ENCODE measurements at regions of chr20 and their contacts with region 1.

Region 1: GRCh38 chr20:47272893-47273590 is 83.5 kb downstream of the ZMYND8 start:
- DNase-seq: peak; percentile 92
- ATAC-seq: peak; percentile 12
- H3K4me3 ChIP-seq: no peak overlapping the region
- H3K27ac ChIP-seq: no peak overlapping the region
- H3K4me1 ChIP-seq: peaks cover 30% of the 10 kb centered on the region
- H3K27me3 ChIP-seq: no peaks in the 10 kb centered on the region
- CTCF ChIP-seq: peak; percentile 97

Region 2: DNA sequence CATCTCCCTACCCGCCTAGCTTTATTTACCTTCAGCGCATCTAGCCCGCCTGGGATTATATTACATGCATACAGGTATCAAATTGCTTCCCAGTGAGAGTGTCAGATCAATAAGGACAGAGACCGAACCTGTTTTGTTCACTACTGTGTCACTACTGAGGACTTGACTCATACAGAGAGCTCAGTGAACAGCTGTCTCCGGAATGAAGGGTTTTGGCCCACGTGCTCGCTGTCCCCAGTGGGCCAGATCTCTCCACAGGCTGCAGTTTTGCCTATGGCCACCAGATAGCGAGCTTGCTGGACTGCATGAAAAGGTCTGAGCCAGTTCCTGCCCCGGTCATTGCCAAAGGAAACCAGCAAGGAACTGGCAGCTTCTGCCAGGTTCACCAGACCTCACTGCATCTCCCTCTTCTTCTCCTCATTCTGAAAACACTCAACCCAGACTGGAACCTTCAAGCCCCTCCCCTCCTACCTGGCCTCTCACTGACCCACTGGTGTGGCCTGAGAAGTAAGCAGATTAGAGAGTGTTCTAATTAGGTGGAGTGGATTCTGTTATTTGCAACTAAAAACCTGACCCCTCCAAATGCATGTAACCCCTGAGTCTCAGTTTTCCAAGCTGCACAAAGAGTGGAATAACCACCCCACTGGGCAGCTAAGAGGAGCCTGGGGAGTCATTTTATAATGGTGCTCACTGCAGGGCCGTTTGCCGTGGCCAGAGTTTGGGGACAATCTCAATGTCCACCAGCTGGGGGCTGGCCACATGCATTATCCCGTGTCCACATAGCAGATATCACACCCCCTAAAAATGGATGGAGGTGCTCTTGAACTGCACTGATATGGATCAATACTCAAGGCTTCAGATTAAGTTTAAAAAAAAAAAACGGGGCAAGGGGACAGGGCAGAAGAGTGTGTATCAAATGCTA is 67.2 kb before region 1 on chr20:
- CTCF ChIA-PET with region 1: interaction called, 4 read pairs
- POLR2A ChIA-PET with region 1: no interaction called
- intact Hi-C with region 1: loop called (anchors 2 kb)
- DNase-seq: peak; percentile 97
- ATAC-seq: peak; percentile 82
- H3K4me3 ChIP-seq: no peak overlapping the region; the same call in 1 of the 2 replicates
- H3K27ac ChIP-seq: peak overlapping the region; percentile 96
- H3K4me1 ChIP-seq: peaks cover 46% of the 10 kb centered on the region
- H3K27me3 ChIP-seq: no peaks in the 10 kb centered on the region
- CTCF ChIP-seq: peak; percentile 92

Region 3: GRCh38 chr20:47317127-47317895 is 44.3 kb after region 1 on chr20:
- CTCF ChIA-PET with region 1: interaction called, 4 read pairs
- POLR2A ChIA-PET with region 1: no interaction called
- intact Hi-C with region 1: loop called (anchors 1 kb)
- DNase-seq: peak; percentile 96
- ATAC-seq: peak; percentile 60
- H3K4me3 ChIP-seq: 0 out of 2 replicates have a peak overlapping the region, but pooled peaks have one; percentile 19
- H3K27ac ChIP-seq: peak overlapping the region; percentile 95
- H3K4me1 ChIP-seq: peaks cover 70% of the 10 kb centered on the region
- H3K27me3 ChIP-seq: no peaks in the 10 kb centered on the region
- CTCF ChIP-seq: no peak

Region 4: DNA sequence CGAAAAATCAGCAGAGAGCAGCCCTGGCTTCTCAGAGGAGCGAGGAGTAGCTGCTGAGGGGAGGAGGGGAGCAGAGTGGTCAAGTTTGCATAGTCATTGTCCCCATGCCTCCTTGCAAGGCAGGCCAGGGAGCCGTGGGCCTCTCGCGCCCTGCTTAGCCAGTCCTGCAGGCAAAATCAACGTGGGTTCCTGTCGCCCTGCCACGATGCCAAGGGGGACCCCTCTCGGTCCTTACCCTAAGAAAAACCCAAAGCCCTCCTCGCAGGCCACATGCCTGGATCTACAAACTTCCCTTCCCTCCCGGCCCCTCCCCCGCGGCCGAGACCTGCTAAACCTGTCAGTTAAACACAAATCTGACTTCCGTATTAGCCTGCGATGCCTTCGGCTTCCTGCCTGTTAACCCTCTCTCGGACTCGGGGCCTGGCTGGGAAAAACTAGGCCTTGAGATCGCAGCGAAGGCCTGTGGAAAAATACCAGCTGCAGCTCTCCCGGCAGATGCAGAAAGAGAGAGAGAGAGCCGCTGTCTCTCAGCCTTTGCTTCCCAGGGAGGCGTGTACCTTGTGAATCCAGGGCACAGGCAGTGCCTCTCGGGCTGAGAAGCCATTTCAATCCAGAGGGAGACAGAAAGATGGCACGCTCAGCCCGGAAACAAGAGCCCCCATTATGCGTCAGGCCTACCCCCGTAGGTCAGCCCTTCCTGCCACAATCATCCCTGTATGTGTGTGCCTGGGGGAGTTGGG is 84.4 kb after region 1 on chr20:
- CTCF ChIA-PET with region 1: interaction called, 8 read pairs
- POLR2A ChIA-PET with region 1: interaction called, 12 read pairs
- intact Hi-C with region 1: loop called (anchors 1 kb)
- DNase-seq: peak; percentile 96
- ATAC-seq: peak; percentile 32
- H3K4me3 ChIP-seq: no peak overlapping the region
- H3K27ac ChIP-seq: peak overlapping the region; percentile 96
- H3K4me1 ChIP-seq: peaks cover 91% of the 10 kb centered on the region
- H3K27me3 ChIP-seq: no peaks in the 10 kb centered on the region
- CTCF ChIP-seq: no peak

Region 5: DNA sequence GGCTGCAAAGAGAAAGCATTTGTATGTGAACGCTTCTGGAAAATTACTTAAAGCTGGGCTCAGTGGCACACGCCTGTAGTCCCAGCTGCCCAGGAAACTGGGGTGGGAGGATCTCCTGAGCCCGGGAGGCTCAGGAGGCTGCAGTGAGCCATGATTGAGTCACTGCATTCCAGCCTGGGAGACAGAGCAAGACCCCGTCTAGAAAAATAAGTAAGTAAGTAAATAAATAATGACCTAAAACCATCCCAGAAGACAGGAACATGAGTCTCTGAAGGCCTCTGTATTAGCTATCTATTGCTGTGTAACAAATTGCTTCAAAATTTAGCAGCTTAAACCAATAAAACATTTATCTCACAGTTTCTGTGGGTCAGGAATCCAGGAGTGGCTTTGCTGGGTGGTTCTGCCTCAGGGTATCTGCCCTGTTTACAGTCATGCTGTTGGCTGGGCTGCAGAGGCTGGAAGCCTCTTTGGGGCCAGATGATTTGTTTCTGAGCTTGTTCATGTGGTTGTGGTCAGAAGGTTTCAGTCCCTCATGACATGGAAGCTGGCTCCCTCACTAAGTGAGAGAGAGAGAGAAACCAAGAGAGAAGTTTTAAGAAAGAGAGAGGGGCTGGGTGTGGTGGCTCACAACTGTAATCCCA is 180.2 kb after region 1 on chr20:
- CTCF ChIA-PET with region 1: no interaction called
- POLR2A ChIA-PET with region 1: no interaction called
- intact Hi-C with region 1: no loop called
- DNase-seq: peak; percentile 96
- ATAC-seq: peak; percentile 99
- H3K4me3 ChIP-seq: peak overlapping the region; percentile 45
- H3K27ac ChIP-seq: peak overlapping the region; percentile 90
- H3K4me1 ChIP-seq: peaks cover 43% of the 10 kb centered on the region
- H3K27me3 ChIP-seq: no peaks in the 10 kb centered on the region
- CTCF ChIP-seq: no peak

Region 6: DNA sequence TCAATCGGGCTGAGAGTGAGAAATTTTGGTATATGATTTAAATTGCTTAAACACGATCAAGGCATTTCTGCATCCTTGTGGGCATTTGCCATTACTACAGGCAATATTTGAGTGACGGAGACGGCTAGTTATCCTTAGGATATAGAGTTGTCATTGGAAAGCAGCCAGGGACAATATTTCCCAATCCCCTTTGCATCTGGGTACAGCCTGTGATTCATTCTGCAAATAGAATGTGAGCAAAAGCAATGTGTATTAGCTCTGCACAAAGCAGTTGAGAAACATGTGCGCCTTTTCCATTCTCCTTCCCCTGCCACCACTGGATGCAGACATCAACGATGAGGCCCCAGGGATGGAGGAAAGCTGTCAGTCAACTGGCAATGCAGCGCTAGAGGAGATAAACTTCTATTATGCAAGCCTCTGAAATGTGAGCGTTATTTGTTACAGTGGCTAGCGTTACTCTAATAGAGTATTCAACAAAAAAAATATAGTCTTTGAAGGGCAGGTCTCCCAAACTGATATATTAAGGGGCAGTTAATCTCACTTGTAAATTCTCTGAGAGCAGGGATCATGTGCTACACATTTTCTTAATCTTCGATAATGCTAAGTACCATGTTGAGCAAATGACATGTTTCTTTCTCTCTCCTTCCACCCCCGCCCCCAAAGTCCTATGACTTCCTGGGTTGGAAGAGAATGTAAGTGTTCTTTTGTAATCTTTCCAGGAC is 191.5 kb after region 1 on chr20:
- CTCF ChIA-PET with region 1: interaction called, 8 read pairs
- POLR2A ChIA-PET with region 1: no interaction called
- intact Hi-C with region 1: loop called (anchors 1 kb)
- DNase-seq: peak; percentile 100
- ATAC-seq: peak; percentile 98
- H3K4me3 ChIP-seq: no peak overlapping the region; the same call in 1 of the 2 replicates
- H3K27ac ChIP-seq: peak overlapping the region; percentile 78
- H3K4me1 ChIP-seq: peaks cover 22% of the 10 kb centered on the region
- H3K27me3 ChIP-seq: no peaks in the 10 kb centered on the region
- CTCF ChIP-seq: peak; percentile 71